MCF 10A (cell line): ENCODE measurements at regions of chr3 and their contacts with region 1.

Region 1: DNA sequence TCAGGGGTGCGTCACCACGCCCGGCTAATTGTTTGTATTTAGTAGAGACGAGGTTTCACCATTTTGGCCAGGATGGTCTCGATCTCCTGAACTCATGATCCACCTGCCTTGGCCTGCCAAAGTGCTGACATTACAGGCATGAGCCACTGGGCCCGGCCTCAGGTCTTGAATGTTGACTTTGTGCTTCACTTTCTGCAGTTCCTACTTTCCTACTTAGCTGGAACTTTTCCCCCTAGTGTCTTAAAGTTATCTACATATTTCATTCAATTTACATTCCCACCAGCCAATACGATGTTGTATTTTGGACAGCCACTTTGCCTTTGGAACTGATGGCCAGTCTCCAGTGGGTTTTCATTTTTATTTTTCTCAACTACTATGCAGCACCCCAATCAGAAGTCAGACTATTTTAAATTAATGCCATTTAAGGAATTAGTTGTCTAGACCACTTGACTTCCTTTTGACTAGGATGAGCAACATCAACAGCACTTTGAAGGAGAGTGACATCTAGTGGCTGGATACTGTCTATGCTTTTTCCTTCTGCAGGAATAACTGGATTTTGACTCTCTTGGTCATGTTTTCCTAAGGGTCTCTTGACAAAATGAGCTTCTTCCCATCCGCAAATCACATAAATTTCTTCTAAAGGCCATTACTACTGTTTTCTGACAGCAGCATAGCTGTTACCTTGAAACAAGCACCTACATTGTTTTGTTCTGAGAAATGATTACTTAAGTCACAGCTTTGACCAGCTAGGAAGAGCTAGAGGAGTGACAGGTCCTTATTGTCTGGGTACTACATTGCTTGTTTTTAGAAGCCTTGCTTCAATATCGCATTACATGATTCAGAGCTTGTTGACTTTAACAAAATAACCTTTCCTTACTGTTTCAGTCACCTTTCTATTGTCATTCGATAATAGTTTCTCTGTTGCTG is 140.2 kb downstream of the ITPR1 start:
- DNase-seq: peak; percentile 63
- H3K4me3 Mint-ChIP-seq: no peak overlapping the region
- H3K27ac Mint-ChIP-seq: no peak overlapping the region
- H3K4me1 Mint-ChIP-seq: no peaks in the 10 kb centered on the region
- H3K27me3 Mint-ChIP-seq: no peaks in the 10 kb centered on the region
- CTCF ChIP-seq: peak; percentile 79

Region 2: DNA sequence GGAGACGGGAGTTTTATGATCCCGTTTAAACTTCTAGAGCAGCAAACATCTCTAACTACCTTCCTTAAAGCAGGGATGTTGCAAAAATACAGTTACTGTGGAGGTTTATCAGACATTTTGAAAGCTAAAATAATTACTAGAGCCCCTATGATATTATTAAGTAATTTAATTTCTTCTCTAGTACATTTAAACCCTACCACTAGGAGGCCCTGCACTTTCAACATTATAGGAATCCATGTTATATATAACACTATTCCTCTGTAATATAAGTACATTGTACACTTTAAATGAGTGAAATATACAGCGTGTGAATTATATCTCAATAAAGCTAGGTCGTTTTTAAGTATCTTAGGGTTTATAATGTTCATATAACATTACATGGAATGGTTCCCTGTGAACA is 318.7 kb before region 1 on chr3:
- CTCF ChIA-PET with region 1: interaction called, 18 read pairs
- POLR2A ChIA-PET with region 1: no interaction called
- intact Hi-C with region 1: loop called (anchors 1 kb)
- DNase-seq: no peak
- H3K4me3 Mint-ChIP-seq: no peak overlapping the region
- H3K27ac Mint-ChIP-seq: no peak overlapping the region
- H3K4me1 Mint-ChIP-seq: no peaks in the 10 kb centered on the region
- H3K27me3 Mint-ChIP-seq: no peaks in the 10 kb centered on the region
- CTCF ChIP-seq: no peak

Region 3: GRCh38 chr3:4334548-4334947 is 298.8 kb before region 1 on chr3:
- CTCF ChIA-PET with region 1: interaction called, 288 read pairs
- POLR2A ChIA-PET with region 1: no interaction called
- intact Hi-C with region 1: no loop called
- DNase-seq: peak; percentile 12
- H3K4me3 Mint-ChIP-seq: no peak overlapping the region
- H3K27ac Mint-ChIP-seq: no peak overlapping the region
- H3K4me1 Mint-ChIP-seq: no peaks in the 10 kb centered on the region
- H3K27me3 Mint-ChIP-seq: no peaks in the 10 kb centered on the region
- CTCF ChIP-seq: no peak

Region 4: DNA sequence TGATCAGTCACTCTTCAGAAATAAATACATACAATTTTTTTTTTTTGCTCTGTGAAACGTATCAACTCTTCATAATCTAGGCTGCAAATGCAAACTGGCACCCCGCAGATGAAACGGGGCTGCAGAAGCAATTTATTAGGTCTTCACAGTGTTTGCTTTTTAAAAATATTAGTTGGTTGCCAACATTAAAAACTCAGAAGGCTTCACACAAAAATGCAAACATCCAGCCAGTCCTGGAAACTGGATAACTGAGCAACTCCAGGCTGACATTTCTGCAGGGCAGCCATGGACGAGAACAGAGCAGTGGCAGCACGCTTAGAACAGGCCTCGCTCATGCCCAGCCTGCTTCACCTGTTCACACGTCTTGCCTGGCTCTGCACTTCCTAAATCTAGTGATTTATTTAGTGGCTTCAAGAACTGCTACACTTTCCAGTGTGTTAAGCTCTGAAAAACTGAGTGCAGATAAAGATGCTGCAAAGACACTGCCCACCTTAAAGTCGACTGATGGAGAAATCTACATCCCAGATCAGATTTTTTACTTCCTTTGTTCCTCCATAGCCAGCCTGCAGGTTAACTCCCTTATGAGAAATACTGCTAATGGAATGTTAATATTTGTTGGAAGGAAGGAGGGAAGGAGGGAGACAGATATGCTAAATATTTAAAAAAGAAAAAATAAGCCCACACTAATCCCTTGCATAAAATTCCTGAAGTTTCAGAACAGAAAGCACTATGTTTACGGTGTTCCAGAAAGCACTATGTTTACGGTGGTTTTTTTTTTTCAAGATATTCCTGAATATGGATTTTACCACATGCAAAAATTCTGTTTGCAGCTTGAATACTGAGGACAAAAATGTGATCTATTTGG is 276.6 kb before region 1 on chr3:
- CTCF ChIA-PET with region 1: interaction called, 288 read pairs
- POLR2A ChIA-PET with region 1: interaction called, 7 read pairs
- intact Hi-C with region 1: no loop called
- DNase-seq: no peak
- H3K4me3 Mint-ChIP-seq: no peak overlapping the region
- H3K27ac Mint-ChIP-seq: no peak overlapping the region
- H3K4me1 Mint-ChIP-seq: no peaks in the 10 kb centered on the region
- H3K27me3 Mint-ChIP-seq: no peaks in the 10 kb centered on the region
- CTCF ChIP-seq: no peak

Region 5: GRCh38 chr3:4466741-4467521 is 166.4 kb before region 1 on chr3 and contains the start of gene SUMF1:
- CTCF ChIA-PET with region 1: interaction called, 10 read pairs
- POLR2A ChIA-PET with region 1: no interaction called
- intact Hi-C with region 1: no loop called
- DNase-seq: peak; percentile 83
- H3K4me3 Mint-ChIP-seq: peak within 1 kb of the TSS; percentile 86
- H3K27ac Mint-ChIP-seq: peak within 1 kb of the TSS; percentile 94
- H3K4me1 Mint-ChIP-seq: peaks cover 7% of the 10 kb centered on the region
- H3K27me3 Mint-ChIP-seq: peaks cover 2% of the 10 kb centered on the region
- CTCF ChIP-seq: no peak
- total RNA-seq, gene SUMF1: 11.8 and 18.9 TPM in 2 replicates

Region 6: GRCh38 chr3:4615750-4616149 is 17.6 kb before region 1 on chr3:
- CTCF ChIA-PET with region 1: interaction called, 17 read pairs
- POLR2A ChIA-PET with region 1: no interaction called
- intact Hi-C with region 1: no loop called
- DNase-seq: no peak
- H3K4me3 Mint-ChIP-seq: no peak overlapping the region
- H3K27ac Mint-ChIP-seq: no peak overlapping the region
- H3K4me1 Mint-ChIP-seq: no peaks in the 10 kb centered on the region
- H3K27me3 Mint-ChIP-seq: peaks cover 23% of the 10 kb centered on the region
- CTCF ChIP-seq: no peak

Region 7: GRCh38 chr3:4693620-4694019 is 60.3 kb after region 1 on chr3:
- CTCF ChIA-PET with region 1: no interaction called
- POLR2A ChIA-PET with region 1: no interaction called
- intact Hi-C with region 1: no loop called
- DNase-seq: no peak
- H3K4me3 Mint-ChIP-seq: no peak overlapping the region
- H3K27ac Mint-ChIP-seq: no peak overlapping the region
- H3K4me1 Mint-ChIP-seq: peaks cover 6% of the 10 kb centered on the region
- H3K27me3 Mint-ChIP-seq: no peaks in the 10 kb centered on the region
- CTCF ChIP-seq: no peak